Right cardiac atrium (tissue), 5 donors: ENCODE measurements at regions of chr2 and their contacts with region 1.

Region 1: GRCh38 chr2:158968396-158969161 is at the start of gene TANC1:
- DNase-seq: peak; percentile 96 to 99 (median 98)
- ATAC-seq: peak; percentile 97 to 98
- H3K4me3 ChIP-seq: peak within 1 kb of the TSS; percentile 72
- H3K27ac ChIP-seq: peak within 1 kb of the TSS; percentile 95
- H3K4me1 ChIP-seq: peaks cover 9% of the 10 kb centered on the region
- H3K27me3 ChIP-seq: no peaks in the 10 kb centered on the region
- total RNA-seq, gene TANC1: 44.2 to 75.8 (median 51.1) TPM

Region 2: DNA sequence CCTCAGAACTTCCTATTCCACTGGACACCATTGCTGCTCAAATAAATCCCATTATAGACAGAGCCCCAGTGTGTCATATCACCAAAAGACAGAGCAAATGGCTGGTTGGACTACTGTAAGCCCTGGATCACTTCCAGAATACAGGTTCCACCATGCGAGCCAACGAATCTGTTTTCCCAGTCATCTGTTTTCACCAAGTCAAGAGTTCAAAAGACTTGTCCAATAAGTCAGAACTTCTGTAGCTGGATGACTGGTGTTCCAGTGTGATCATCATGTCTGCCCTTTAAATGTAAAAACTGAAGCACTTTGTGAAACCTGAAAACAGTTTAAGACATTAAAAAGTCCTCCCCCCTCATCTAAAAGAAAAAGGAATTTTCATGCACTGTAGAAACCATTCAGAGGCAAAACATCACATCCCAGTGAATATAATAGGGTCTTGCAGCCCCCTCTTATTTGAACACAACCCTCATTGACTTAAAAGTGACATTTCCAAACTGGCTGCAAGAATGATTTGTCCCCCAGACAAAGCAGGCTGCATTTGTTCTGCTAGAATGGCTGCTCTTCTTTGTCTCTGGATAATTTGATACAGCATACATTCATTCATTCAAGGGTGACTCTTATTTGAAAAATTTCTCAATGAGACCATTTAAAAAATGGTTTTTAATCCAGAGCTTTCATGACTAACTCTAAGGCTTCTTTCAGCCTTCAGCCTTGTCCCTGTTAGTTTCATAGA is 64.7 kb before region 1 on chr2:
- intact Hi-C with region 1: loop called in 1 of 4 experiments (anchors 5 kb)
- DNase-seq: no peak
- ATAC-seq: no peak
- H3K4me3 ChIP-seq: no peak overlapping the region
- H3K27ac ChIP-seq: no peak overlapping the region
- H3K4me1 ChIP-seq: peaks cover 2% of the 10 kb centered on the region
- H3K27me3 ChIP-seq: no peaks in the 10 kb centered on the region

Region 3: GRCh38 chr2:159030674-159031380 is 62.2 kb after region 1 on chr2:
- intact Hi-C with region 1: loop called in 1 of 4 experiments (anchors 10 kb)
- DNase-seq: peak; percentile 69 to 85 (median 78)
- ATAC-seq: peak; percentile 94
- H3K4me3 ChIP-seq: no peak overlapping the region
- H3K27ac ChIP-seq: peak overlapping the region; percentile 83
- H3K4me1 ChIP-seq: peaks cover 37% of the 10 kb centered on the region
- H3K27me3 ChIP-seq: no peaks in the 10 kb centered on the region

Region 4: DNA sequence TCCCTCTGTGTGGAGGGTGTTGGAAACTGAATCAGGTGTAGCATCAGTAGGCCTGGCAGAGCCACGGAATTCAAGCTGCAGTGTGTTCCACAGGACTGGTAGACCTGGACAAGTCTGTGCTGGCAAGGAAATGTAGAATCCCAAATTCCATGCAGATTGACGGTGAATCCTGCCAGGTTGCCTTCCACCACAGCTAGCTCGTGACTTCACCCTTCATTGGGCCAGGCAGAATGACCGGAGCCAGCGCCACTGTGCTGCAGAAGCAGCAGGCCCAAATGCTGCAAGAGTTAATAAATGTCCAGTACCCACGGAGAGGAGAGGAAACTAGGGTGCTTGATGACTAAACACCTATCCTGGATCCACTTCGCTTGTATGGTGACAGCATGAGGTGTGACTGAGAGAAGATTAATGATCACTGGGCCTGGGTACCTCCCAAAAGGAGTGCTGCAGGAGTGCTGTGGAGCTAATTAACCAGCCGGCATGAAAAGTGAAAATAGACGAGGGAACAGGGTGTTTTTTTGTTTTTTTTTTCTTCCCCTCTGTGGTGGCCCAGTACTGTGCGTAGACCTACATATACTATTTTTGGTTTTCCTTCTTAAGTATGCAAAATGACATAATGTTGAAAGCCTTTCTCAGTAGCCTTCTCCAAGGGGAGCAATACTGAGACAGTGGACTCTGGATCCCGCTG is 122.1 kb after region 1 on chr2:
- intact Hi-C with region 1: loop called in 2 of 4 experiments (anchors 5 to 10 kb)
- DNase-seq: peak in 2 of 3 donors; percentile 51 to 67
- ATAC-seq: peak; percentile 27 to 57
- H3K4me3 ChIP-seq: no peak overlapping the region
- H3K27ac ChIP-seq: peak overlapping the region; percentile 96
- H3K4me1 ChIP-seq: peaks cover 42% of the 10 kb centered on the region
- H3K27me3 ChIP-seq: no peaks in the 10 kb centered on the region

Region 5: DNA sequence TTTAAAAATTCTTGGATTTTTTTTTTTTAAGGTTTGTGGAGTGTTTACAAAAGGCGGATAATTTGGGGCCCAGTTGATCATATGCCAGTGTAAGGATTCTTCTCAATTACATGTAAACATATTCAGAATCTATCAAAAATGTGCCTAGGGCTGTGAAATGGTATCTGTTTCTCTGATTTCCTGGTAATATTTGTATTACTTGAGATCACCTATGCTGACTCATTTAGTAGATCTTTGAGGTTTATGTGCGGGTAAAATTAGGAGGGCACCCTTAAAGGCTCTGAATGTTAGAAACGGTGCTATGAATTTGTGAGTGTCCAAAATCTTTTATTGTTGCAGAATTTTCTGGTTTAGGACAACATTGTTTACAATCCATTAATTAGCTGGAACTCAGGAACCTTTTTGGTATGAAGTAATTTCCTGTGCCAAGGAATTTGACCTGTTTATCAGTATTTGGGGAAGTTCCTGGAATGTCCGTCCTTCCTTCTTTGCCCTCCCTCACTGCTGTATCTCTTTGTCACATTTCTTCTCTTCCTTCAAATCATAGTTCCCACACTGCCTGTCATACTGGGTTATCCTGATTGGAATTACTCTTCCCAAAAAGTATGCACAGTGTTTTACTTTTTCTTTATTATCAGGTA is 130.4 kb after region 1 on chr2:
- intact Hi-C with region 1: loop called in 2 of 4 experiments (anchors 5 to 10 kb)
- DNase-seq: no peak
- ATAC-seq: no peak
- H3K4me3 ChIP-seq: no peak overlapping the region
- H3K27ac ChIP-seq: peak overlapping the region; percentile 47
- H3K4me1 ChIP-seq: peaks cover 15% of the 10 kb centered on the region
- H3K27me3 ChIP-seq: no peaks in the 10 kb centered on the region

Region 6: DNA sequence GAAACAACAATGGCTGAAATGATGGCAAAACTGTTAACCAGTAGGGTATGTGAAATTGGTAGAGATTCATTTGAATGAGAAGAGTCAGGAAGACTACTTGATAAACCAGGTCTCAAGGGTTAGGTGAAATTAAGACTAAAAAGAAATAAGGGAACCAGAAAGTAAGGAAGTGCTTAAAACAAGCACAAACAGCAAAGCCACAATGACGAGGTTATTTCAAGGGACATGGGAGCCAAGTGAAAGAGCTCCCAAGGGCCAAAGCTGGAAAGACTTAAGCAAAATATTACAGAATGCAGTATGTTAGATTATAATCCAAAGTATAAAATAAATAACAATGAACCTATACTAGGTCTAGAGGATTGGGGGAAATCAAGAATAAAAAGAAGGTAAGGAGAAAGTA is 848.7 kb after region 1 on chr2:
- intact Hi-C with region 1: no loop called
- DNase-seq: no peak
- ATAC-seq: no peak
- H3K4me3 ChIP-seq: no peak overlapping the region
- H3K27ac ChIP-seq: no peak overlapping the region
- H3K4me1 ChIP-seq: no peaks in the 10 kb centered on the region
- H3K27me3 ChIP-seq: no peaks in the 10 kb centered on the region